Common myeloid progenitor, CD34-positive (primary cell): ENCODE measurements at regions of chr2 and their contacts with region 1.

Region 1: DNA sequence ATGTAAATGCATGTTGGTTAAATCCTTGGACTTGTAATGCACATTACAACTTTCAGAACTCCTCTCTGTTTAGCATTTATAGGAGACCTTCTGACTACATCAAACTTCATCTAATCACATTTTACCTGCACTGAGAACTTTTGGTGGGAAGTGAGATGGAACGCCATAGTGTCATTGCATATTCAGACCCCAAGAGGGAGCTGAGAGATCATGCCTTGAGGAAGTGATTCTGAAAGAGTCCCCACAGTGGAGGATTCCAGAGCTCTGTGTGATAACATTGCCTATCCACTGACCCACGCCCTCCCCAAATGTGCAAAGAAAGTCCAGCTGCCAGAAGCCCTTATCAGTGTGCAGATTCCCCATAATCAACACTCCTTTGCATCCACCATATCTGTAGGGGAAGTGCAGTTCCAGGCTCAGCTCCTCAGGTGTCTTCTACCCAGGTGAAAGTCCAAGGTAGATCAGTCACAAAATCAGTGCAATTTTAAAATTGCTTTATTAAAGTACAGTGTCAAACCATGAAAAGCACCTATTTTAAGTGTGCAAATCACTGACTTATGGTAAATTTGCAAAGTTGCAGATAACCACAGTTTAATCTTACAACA is 212.4 kb downstream of the RPIA start:
- DNase-seq: peak; percentile 50 to 71 (median 69)
- H3K4me3 ChIP-seq: no peak overlapping the region
- H3K27ac ChIP-seq: no peak overlapping the region
- H3K4me1 ChIP-seq: no peaks in the 10 kb centered on the region
- H3K27me3 ChIP-seq: no peaks in the 10 kb centered on the region

Region 2: DNA sequence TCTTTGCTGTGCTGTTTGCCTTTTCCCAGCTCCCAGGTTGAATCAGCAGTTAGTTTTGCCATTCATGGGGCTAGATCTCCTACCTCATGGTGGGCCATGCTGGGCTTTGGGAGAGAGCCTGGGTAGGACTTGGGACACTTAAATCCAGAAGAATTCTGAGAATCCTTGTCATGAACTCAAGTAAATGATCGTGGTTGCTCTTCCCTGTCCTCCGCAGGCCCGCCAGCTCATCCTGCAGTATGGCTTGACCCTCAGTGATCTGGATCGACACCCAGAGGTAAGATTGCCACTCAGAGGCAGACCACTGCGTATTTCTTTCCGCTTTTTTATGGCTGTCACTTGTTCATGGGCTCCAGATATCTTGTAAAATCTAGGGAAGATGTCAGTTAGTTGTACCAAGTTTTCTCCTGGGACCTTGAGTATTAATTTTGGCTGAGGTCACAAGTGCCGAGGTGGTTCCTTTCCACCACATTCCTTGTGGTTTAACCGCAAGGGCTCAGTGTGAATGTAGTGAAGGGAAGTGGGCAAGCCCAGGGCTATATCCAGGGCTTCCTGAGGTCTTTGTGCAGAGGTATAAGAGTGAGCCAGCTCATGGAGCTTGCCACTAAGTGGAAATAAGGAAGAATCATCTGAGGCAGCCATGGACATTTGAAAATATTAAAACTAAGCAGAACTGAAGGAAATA is 174.6 kb before region 1 on chr2:
- CTCF ChIA-PET with region 1: no interaction called
- POLR2A ChIA-PET with region 1: no interaction called
- DNase-seq: peak; percentile 52 to 86 (median 78)
- H3K4me3 ChIP-seq: no peak overlapping the region
- H3K27ac ChIP-seq: no peak overlapping the region
- H3K4me1 ChIP-seq: peaks cover 0 to 26% (median 13%) of the 10 kb centered on the region in 4 experiments
- H3K27me3 ChIP-seq: no peaks in the 10 kb centered on the region

Region 3: DNA sequence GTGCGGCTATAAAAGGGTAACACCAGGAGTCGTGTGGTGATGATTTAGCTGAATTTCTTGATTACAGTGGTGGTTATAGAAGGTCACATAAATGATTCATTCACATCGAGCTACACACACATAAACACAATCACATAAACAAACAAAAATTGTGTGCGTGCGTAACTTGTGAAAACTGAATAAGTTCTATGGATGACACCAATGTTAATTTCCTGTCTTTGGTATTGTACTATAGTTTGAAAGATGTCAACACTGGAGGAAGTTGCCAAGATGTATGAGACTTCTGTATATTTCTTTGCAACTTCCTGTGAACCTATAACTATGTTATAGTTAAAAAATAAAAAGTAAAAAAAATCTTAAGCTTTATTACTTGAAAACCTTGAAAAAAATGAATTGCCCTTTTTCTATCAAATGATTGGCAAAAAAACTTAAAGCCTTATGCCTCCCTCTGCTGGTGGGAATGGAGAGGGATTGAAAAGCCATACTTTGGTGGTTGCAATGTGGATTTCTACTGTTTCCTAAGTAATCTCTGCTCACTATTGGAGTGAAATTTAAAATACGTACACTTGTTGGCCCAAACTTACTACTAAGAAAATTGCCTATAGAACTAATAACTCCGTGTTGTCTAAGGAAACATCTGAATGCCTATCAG is 15.4 kb after region 1 on chr2:
- CTCF ChIA-PET with region 1: interaction called, 10 read pairs
- POLR2A ChIA-PET with region 1: no interaction called
- DNase-seq: peak; percentile 48 to 73 (median 71)
- H3K4me3 ChIP-seq: no peak overlapping the region
- H3K27ac ChIP-seq: no peak overlapping the region
- H3K4me1 ChIP-seq: no peaks in the 10 kb centered on the region
- H3K27me3 ChIP-seq: no peaks in the 10 kb centered on the region